IMR-90 (cell line): ENCODE measurements at regions of chr10 and their contacts with region 1.

Region 1: DNA sequence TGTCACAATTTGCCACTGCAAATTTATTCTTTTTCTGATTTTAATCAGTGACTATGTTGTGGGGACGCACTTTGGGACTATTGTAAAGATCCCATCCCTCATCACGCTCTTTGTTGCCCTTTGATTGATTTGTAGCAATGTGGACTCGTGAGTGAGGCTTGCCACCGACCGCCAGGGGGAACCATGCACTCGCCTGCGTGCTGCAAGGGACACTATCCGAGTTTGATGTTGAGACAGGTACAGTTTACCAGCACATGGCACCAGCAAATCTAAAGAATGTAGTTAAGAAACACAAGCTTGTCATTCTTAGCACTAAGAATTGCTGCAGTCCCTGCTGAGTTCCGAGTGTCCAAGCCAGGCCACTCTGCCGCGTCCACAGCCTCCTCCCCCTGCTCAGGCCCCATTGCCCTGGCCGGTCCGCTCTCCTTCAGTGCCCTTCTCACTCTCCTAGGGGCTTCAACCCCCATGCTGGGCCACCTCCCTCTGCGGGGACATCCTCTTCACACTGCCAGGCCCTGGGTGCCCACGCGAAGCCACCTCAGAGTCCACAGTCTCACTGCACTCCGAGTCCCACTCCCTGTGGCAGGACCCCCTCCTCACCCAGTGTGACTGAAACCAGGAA is 2.0 kb upstream of the SFTPA2 start:
- DNase-seq: peak; percentile 54
- ATAC-seq: peak; percentile 91
- H3K4me3 ChIP-seq: no peak overlapping the region
- H3K27ac ChIP-seq: no peak overlapping the region
- H3K4me1 ChIP-seq: no peaks in the 10 kb centered on the region
- H3K27me3 ChIP-seq: peaks cover 12% of the 10 kb centered on the region
- CTCF ChIP-seq: peak; percentile 82
- POLR2A ChIP-seq: no peak
- RAD21 ChIP-seq: peak; percentile 80

Region 2: GRCh38 chr10:79929409-79929904 is 367.2 kb after region 1 on chr10:
- CTCF ChIA-PET with region 1: no interaction called
- POLR2A ChIA-PET with region 1: no interaction called
- dilution Hi-C with region 1: no loop called
- in situ Hi-C with region 1: loop called (anchors 5 kb)
- intact Hi-C with region 1: loop called (anchors 1 kb)
- DNase-seq: peak; percentile 58
- ATAC-seq: peak; percentile 91
- H3K4me3 ChIP-seq: no peak overlapping the region
- H3K27ac ChIP-seq: no peak overlapping the region
- H3K4me1 ChIP-seq: no peaks in the 10 kb centered on the region
- H3K27me3 ChIP-seq: peaks cover 19% of the 10 kb centered on the region
- CTCF ChIP-seq: peak; percentile 91
- POLR2A ChIP-seq: no peak
- RAD21 ChIP-seq: peak; percentile 96

Region 3: GRCh38 chr10:80046629-80047441 is 484.6 kb after region 1 on chr10:
- CTCF ChIA-PET with region 1: no interaction called
- POLR2A ChIA-PET with region 1: no interaction called
- dilution Hi-C with region 1: no loop called
- in situ Hi-C with region 1: no loop called
- intact Hi-C with region 1: loop called (anchors 1 kb)
- DNase-seq: peak; percentile 50
- ATAC-seq: peak; percentile 98
- H3K4me3 ChIP-seq: no peak overlapping the region
- H3K27ac ChIP-seq: no peak overlapping the region
- H3K4me1 ChIP-seq: no peaks in the 10 kb centered on the region
- H3K27me3 ChIP-seq: peaks cover 6% of the 10 kb centered on the region; the same call in 1 of the 2 replicates
- CTCF ChIP-seq: peak; percentile 81
- POLR2A ChIP-seq: no peak
- RAD21 ChIP-seq: peak; percentile 67

Region 4: DNA sequence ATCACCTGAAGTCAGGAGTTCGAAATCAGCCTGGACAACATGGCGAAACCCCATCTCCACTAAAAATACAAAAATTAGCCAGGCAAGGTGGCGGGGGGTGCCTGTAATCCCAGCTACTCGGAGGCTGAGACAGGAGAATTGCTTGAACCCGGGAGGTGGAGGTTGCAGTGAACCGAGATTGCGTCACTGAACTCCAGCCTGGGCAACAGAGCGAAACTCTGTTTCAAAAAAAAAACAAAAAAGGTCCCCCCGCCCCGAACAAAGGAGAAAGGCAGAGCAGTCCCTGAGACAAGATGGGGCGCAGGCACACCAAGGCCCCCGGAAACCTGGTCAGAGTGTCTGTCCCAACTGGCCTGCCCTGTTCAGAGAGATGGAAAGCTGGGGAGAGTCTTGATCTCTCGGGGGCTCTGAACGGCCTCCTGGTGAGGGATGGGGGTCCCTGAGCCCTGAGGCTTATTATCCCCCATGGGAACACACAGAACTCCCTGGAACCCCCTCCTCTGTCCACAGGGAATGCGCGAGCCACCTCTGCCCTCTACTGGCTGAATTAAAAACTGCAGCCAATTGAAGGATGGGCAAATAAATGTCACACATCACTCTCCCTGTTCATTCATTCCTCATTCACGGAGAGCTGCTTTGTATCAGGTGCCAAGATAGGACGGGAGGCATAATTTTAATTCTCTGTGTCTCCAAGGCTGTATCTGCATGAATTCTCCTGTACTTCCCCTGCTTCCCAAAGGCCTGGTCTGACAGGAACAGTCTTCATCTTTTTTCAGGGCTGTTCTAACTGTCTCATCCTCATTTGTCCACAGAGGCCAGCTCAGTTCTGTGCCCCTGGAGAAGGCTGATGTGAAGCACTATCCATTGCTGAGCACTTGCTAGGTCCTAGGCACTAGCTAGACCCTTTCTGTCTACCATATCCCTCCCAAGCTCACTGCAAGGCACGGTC is 698.3 kb after region 1 on chr10:
- CTCF ChIA-PET with region 1: no interaction called
- POLR2A ChIA-PET with region 1: no interaction called
- dilution Hi-C with region 1: no loop called
- in situ Hi-C with region 1: loop called (anchors 25 kb)
- intact Hi-C with region 1: no loop called
- DNase-seq: no peak
- ATAC-seq: peak; percentile 89
- H3K4me3 ChIP-seq: no peak overlapping the region
- H3K27ac ChIP-seq: no peak overlapping the region
- H3K4me1 ChIP-seq: no peaks in the 10 kb centered on the region
- H3K27me3 ChIP-seq: peaks cover 14% of the 10 kb centered on the region; the same call in 1 of the 2 replicates
- CTCF ChIP-seq: peak; percentile 78
- POLR2A ChIP-seq: no peak
- RAD21 ChIP-seq: peak; percentile 72